ENCODE measurements at regions of chr4 and their contacts with region 1.

Region 1: DNA sequence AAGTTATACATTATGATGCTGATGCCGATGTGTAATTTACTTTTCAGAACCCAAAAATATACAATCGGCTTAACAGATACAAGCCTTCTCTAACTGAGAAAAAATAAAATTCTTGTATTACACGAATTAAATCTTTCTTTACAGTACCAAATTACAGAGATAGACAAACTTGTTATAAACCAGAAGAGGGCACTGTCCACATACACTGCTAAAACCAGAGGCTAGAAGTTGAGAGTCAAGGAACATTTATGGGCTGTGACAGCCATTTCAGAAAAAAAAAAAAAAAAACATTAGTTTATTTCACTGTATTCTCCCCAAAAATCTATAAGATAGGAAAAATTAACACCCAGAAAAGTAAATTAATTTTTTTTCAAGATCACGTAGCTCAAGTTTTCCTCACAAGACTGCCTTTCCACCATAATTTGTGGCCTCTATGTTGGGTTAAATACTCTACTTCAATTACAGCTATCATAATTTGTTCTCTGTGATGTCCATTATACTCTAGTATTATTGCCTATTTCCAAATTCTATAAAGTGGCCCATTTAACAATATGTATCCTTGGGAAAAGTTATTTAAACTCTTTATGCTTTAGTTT is 12.0 kb downstream of the EREG start:
- DNase-seq: peak; percentile 67
- H3K4me3 ChIP-seq: no peak overlapping the region
- H3K27ac ChIP-seq: no peak overlapping the region
- H3K4me1 ChIP-seq: peaks cover 7% of the 10 kb centered on the region
- H3K27me3 ChIP-seq: no peaks in the 10 kb centered on the region
- CTCF ChIP-seq: peak; percentile 31
- POLR2A ChIP-seq: no peak

Region 2: DNA sequence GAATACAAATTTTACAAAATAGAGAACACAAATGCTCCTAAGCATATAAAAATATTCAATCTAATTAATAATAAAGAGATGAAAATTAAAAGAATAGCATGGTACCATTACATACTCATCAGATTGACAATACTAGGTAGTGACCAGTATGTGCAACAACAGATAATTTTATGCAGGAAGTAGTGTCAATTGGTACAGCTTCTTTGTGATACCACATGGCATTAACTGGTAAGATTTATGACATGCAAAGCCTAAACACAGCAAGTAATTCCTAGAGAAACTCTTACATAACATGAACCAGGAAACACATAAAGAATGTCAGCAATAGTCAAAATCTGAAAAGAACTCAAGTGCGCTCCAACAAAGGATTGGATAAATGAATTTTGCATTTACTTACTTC is 304.2 kb before region 1 on chr4:
- CTCF ChIA-PET with region 1: no interaction called
- POLR2A ChIA-PET with region 1: no interaction called
- dilution Hi-C with region 1: no loop called
- intact Hi-C with region 1: no loop called
- DNase-seq: no peak
- H3K4me3 ChIP-seq: no peak overlapping the region
- H3K27ac ChIP-seq: no peak overlapping the region
- H3K4me1 ChIP-seq: no peaks in the 10 kb centered on the region
- H3K27me3 ChIP-seq: no peaks in the 10 kb centered on the region
- CTCF ChIP-seq: no peak
- POLR2A ChIP-seq: no peak

Region 3: DNA sequence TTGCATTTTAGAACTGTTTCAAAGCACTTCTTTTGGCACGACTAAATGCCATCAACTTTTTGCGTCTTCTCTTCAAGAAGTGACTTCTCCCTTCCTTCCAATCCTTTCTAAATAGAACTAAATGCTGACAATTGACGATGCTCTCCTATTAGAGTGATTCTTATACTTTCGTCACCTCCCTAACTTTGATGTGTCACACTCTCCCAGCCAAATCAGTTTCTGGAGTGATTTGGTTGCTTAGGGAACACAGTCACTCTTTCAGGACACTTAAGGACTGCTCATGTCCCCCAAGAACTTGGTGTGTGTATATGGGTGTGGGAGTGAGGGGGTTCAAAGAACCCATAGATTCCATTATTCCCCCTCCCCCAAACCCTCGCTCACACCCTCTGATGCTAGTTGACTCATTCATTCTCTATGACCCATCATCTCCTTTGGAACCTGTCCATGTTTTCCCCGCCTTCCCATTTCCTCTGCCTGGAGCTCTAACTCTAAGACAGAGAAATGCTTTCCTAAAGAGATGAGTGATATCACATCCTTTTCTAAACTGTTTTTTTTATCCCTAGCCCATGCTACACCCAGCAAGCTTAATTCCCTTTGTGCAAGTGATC is 41.2 kb after region 1 on chr4:
- CTCF ChIA-PET with region 1: no interaction called
- POLR2A ChIA-PET with region 1: no interaction called
- dilution Hi-C with region 1: no loop called
- intact Hi-C with region 1: loop called (anchors 2 kb)
- DNase-seq: peak; percentile 95
- H3K4me3 ChIP-seq: no peak overlapping the region
- H3K27ac ChIP-seq: peak overlapping the region; percentile 58
- H3K4me1 ChIP-seq: peaks cover 18% of the 10 kb centered on the region
- H3K27me3 ChIP-seq: no peaks in the 10 kb centered on the region
- CTCF ChIP-seq: no peak
- POLR2A ChIP-seq: no peak

Region 4: DNA sequence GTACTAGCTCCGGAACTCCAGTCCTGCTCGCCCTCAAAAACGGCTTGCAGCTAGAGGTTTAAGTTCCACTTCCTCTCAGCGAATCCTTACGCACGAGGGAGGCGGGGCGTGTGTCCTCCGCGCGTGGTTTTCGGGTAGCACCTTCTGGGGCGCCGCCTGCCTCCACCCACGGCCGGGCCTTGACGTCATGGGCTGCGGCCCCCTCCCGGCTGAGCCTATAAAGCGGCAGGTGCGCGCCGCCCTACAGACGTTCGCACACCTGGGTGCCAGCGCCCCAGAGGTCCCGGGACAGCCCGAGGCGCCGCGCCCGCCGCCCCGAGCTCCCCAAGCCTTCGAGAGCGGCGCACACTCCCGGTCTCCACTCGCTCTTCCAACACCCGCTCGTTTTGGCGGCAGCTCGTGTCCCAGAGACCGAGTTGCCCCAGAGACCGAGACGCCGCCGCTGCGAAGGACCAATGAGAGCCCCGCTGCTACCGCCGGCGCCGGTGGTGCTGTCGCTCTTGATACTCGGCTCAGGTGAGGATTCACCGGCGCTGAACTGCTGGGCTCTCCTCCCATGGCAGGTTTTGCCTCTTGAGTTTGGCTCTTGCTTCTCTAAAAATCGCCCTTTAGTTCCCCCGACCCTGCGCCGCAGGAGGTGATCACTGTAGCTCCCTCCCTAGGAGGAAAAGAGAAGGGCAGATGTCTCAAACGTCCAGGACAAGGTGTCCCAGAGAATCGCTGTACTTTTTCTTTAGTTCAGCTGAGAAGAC is 68.1 kb after region 1 on chr4 and contains the start of gene AREG:
- CTCF ChIA-PET with region 1: interaction called, 39 read pairs
- POLR2A ChIA-PET with region 1: no interaction called
- dilution Hi-C with region 1: no loop called
- intact Hi-C with region 1: loop called (anchors 1 kb)
- DNase-seq: peak; percentile 70
- H3K4me3 ChIP-seq: peak within 1 kb of the TSS; percentile 8 to 73 (median 45)
- H3K27ac ChIP-seq: no peak within 1 kb of the TSS
- H3K4me1 ChIP-seq: peaks cover 3% of the 10 kb centered on the region
- H3K27me3 ChIP-seq: no peaks in the 10 kb centered on the region
- CTCF ChIP-seq: peak; percentile 62
- POLR2A ChIP-seq: no peak
- total RNA-seq, gene AREG: 0.46 and 0.55 TPM in 2 replicates

Measured in endothelial cell of umbilical vein (primary cell).